GM12878 (cell line): ENCODE measurements at regions of chr7 and their contacts with region 1.

Region 1: GRCh38 chr7:127708788-127709187 is 56.8 kb downstream of the SND1 start:
- DNase-seq: peak; percentile 34
- ATAC-seq: peak; percentile 90
- H3K4me3 ChIP-seq: no peak overlapping the region
- H3K27ac ChIP-seq: no peak overlapping the region
- H3K4me1 ChIP-seq: no peaks in the 10 kb centered on the region
- H3K27me3 ChIP-seq: no peaks in the 10 kb centered on the region
- CTCF ChIP-seq: peak; percentile 60 to 74 (median 68)
- EP300 ChIP-seq: no peak
- POLR2A ChIP-seq: no peak
- RAD21 ChIP-seq: peak; percentile 84

Region 2: DNA sequence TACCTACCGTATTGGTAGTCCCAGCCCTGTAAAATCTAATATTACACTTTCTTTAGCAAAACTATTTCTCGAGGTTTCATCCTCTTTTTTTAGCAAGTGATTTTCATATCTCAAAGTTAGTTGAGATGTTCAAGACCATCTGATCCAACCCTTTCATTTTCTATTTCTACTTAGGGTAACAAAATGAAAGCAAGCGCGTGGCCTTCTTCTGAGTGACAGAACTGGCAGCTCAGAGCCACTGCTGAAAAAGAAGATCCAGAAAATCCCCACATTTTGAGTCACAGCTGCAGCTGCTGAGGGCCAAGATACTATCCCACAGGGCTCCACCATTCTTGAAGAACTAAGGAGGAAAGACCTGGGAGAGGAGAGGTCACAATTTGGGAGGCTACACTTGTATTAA is 291.4 kb before region 1 on chr7:
- CTCF ChIA-PET with region 1: no interaction called
- POLR2A ChIA-PET with region 1: no interaction called
- RAD21 ChIA-PET with region 1: no interaction called
- SMC1A ChIA-PET with region 1: no interaction called
- in situ Hi-C with region 1: no loop called
- intact Hi-C with region 1: no loop called
- DNase-seq: peak; percentile 21
- ATAC-seq: peak; percentile 78
- H3K4me3 ChIP-seq: peak overlapping the region; percentile 33; the same call in 1 of the 2 replicates
- H3K27ac ChIP-seq: 0 out of 2 replicates have a peak overlapping the region, but pooled peaks have one; percentile 2
- H3K4me1 ChIP-seq: peaks cover 24% of the 10 kb centered on the region
- H3K27me3 ChIP-seq: no peaks in the 10 kb centered on the region
- CTCF ChIP-seq: no peak
- EP300 ChIP-seq: no peak
- POLR2A ChIP-seq: no peak
- RAD21 ChIP-seq: no peak

Region 3: DNA sequence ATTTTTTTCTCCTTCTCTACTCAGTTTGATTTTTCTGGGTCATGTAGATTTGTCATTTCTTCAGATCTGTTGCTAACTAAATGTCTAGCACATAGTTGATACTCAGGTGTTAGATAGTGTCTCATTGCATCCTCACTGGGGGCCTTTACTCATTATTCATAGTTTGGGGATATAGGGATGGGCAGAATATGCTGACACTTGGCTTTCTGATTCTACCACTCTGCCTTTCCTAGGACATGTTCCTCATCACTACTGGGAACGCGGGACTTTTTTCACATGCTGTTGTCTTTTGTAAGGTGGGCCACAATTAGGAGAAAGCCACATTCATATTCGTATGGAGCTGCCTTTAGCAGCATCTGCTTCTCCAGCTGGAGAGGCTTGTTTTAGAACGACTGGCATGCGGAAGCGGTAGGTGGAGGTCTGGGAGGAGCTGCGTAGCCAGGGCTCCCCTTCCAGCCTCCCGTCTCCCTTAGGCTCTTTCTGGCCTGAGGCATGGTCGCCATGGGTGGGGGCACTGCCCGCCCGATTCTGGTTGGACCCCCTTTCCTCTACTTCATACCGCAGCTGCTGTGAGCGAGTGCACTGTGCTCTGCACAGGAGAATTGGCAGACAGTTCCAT is 22.0 kb after region 1 on chr7:
- CTCF ChIA-PET with region 1: interaction called, 10 read pairs
- POLR2A ChIA-PET with region 1: no interaction called
- RAD21 ChIA-PET with region 1: interaction called, 3 read pairs
- SMC1A ChIA-PET with region 1: interaction called, 4 read pairs
- in situ Hi-C with region 1: no loop called
- intact Hi-C with region 1: no loop called
- DNase-seq: no peak
- ATAC-seq: no peak
- H3K4me3 ChIP-seq: no peak overlapping the region
- H3K27ac ChIP-seq: no peak overlapping the region
- H3K4me1 ChIP-seq: no peaks in the 10 kb centered on the region
- H3K27me3 ChIP-seq: no peaks in the 10 kb centered on the region
- CTCF ChIP-seq: no peak
- EP300 ChIP-seq: no peak
- POLR2A ChIP-seq: no peak
- RAD21 ChIP-seq: no peak

Region 4: GRCh38 chr7:127920787-127921438 is 212.1 kb after region 1 on chr7:
- CTCF ChIA-PET with region 1: interaction called, 10 read pairs
- POLR2A ChIA-PET with region 1: no interaction called
- RAD21 ChIA-PET with region 1: no interaction called
- SMC1A ChIA-PET with region 1: interaction called, 3 read pairs
- in situ Hi-C with region 1: no loop called
- intact Hi-C with region 1: no loop called
- DNase-seq: no peak
- ATAC-seq: peak; percentile 48
- H3K4me3 ChIP-seq: no peak overlapping the region
- H3K27ac ChIP-seq: peak overlapping the region; percentile 20; the same call in 1 of the 2 replicates
- H3K4me1 ChIP-seq: peaks cover 8% of the 10 kb centered on the region; the same call in 1 of the 2 replicates
- H3K27me3 ChIP-seq: no peaks in the 10 kb centered on the region
- CTCF ChIP-seq: no peak
- EP300 ChIP-seq: no peak
- POLR2A ChIP-seq: no peak
- RAD21 ChIP-seq: no peak

Region 5: DNA sequence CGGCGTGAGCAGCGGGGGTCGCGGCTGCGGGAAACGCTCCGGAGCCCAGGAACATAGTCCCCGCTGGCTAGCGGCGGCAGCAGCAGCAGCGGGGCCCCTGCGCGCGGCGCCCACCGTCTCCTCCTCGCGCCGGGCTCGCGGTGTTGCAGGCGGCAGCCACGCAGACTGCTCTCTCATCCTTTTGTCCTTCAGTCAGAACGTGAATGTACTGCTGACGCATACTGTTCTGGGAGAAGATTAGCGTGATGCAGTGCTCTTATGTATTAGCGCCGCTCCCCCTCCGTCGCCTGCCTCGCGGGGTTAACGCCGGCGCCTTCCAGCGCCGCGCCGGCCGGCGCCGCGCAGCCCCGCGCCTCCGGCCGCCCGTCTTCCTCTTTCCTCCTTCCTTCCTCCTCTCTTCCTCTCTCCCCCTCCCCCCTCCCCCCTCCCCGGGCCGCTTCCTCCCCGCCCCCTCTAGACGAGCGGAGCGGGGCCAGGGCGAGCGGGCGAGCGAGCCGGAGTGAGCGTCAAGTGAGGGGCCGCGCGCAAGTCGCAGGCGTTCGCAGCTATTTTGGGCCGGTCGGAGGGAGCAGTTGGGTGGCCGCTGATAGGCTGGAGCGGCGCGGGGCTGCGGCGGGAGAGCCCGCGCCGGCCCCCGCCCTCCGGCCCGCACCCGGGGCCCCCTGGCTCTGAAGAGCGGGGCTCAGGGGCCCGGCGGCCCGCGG is 323.3 kb after region 1 on chr7:
- CTCF ChIA-PET with region 1: interaction called, 3 read pairs
- POLR2A ChIA-PET with region 1: no interaction called
- RAD21 ChIA-PET with region 1: interaction called, 6 read pairs
- SMC1A ChIA-PET with region 1: interaction called, 5 read pairs
- in situ Hi-C with region 1: no loop called
- intact Hi-C with region 1: loop called (anchors 5 kb)
- DNase-seq: no peak
- ATAC-seq: peak; percentile 12; the same call in 2 of the 3 replicates
- H3K4me3 ChIP-seq: peak overlapping the region; percentile 20; the same call in 1 of the 2 replicates
- H3K27ac ChIP-seq: no peak overlapping the region
- H3K4me1 ChIP-seq: peaks cover 30% of the 10 kb centered on the region
- H3K27me3 ChIP-seq: no peaks in the 10 kb centered on the region
- CTCF ChIP-seq: no peak
- EP300 ChIP-seq: no peak
- POLR2A ChIP-seq: no peak; the same call in none of the 2 replicates
- RAD21 ChIP-seq: no peak

Region 6: DNA sequence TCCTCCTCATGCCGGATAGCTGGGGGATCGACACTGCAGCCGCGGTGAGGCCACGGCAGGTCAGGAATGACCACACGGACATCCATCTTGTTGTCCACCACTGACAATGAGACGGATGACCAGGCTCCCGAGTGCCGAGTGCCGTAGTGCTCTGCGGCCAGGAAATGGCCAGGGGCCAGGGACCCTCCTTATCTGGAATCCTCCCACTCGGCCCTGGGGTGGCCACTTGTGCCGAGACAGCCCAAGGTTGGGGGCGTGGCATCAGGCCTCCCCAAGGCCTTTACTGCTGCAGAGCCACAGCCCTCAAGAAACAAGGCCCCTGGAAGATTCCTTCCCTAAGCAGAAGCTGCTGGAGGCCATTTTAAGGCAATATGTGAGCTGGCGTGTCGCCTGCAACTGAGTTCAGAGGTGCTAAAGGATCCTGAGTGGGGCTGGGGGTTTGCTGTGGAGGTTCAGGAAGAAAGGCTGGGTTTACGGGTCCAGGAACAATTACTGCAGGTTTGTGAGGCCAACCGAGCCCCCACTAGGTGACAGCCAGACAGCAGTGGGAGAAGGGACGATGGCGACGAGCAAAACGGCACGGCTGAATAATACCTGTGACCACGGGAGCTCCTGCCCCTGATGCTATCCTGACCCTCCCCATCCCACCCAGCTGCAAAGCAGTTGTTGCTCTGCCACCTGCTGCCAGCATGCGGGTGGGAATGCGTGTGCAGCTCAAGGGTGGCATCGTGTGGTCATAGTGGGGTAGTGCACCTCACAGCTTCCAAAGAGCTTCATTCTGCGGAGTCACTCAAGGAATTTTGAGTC is 500.6 kb after region 1 on chr7:
- CTCF ChIA-PET with region 1: interaction called, 152 read pairs
- POLR2A ChIA-PET with region 1: no interaction called
- RAD21 ChIA-PET with region 1: interaction called, 86 read pairs
- SMC1A ChIA-PET with region 1: interaction called, 56 read pairs
- in situ Hi-C with region 1: loop called (anchors 5 kb)
- intact Hi-C with region 1: loop called (anchors 1 kb)
- DNase-seq: peak; percentile 13
- ATAC-seq: peak; percentile 85
- H3K4me3 ChIP-seq: no peak overlapping the region
- H3K27ac ChIP-seq: no peak overlapping the region
- H3K4me1 ChIP-seq: no peaks in the 10 kb centered on the region
- H3K27me3 ChIP-seq: no peaks in the 10 kb centered on the region; a peak in 3 of 4 replicates
- CTCF ChIP-seq: peak; percentile 97 to 99 (median 99); a peak in 5 of 6 replicates
- EP300 ChIP-seq: no peak
- POLR2A ChIP-seq: no peak
- RAD21 ChIP-seq: peak; percentile 99